ENCODE measurements at regions of chr16 and their contacts with region 1.

Region 1: DNA sequence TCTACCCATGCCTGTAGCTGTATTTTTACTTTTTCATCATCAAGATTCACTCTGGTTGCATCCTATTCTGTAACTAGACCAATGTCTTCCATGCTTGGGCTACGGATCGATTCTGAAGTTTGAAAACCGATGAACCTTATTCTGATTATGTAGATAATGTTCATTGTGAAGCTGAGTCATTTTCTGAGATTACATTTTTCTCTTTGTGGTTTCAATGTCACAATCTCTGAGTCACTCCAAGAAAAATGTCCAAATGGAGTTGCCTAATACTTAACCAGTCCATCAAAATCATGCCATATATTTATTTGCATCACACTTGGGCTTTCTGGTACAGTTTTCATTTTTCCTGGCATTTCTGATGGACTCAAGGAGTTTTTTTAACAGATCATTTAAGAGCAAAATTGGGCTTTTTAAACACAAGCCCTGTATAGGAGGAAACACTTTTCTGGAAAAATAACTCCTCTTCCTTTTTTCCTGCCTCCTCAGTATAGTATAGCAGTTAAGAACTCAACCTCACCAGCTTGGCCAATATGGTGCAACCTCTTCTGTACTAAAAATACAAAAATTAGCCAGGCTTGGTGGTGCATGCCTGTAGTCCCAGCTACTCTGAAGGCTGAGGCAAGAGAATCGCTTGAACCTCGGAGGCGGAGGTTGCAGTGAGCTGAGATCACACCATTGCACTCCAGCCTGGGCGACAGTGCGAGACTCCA is 17.5 kb downstream of the CACNG3 start:
- DNase-seq: peak; percentile 84
- H3K4me3 Mint-ChIP-seq: peak overlapping the region; percentile 2
- H3K27ac Mint-ChIP-seq: peak overlapping the region; percentile 0
- H3K4me1 Mint-ChIP-seq: peaks cover 24% of the 10 kb centered on the region
- H3K27me3 Mint-ChIP-seq: no peaks in the 10 kb centered on the region
- CTCF ChIP-seq: no peak

Region 2: GRCh38 chr16:24253192-24253591 is 20.4 kb before region 1 on chr16:
- CTCF ChIA-PET with region 1: interaction called, 23 read pairs
- POLR2A ChIA-PET with region 1: no interaction called
- intact Hi-C with region 1: no loop called
- DNase-seq: peak; percentile 60
- H3K4me3 Mint-ChIP-seq: no peak overlapping the region
- H3K27ac Mint-ChIP-seq: no peak overlapping the region
- H3K4me1 Mint-ChIP-seq: peaks cover 6% of the 10 kb centered on the region
- H3K27me3 Mint-ChIP-seq: peaks cover 52% of the 10 kb centered on the region
- CTCF ChIP-seq: peak; percentile 61

Region 3: DNA sequence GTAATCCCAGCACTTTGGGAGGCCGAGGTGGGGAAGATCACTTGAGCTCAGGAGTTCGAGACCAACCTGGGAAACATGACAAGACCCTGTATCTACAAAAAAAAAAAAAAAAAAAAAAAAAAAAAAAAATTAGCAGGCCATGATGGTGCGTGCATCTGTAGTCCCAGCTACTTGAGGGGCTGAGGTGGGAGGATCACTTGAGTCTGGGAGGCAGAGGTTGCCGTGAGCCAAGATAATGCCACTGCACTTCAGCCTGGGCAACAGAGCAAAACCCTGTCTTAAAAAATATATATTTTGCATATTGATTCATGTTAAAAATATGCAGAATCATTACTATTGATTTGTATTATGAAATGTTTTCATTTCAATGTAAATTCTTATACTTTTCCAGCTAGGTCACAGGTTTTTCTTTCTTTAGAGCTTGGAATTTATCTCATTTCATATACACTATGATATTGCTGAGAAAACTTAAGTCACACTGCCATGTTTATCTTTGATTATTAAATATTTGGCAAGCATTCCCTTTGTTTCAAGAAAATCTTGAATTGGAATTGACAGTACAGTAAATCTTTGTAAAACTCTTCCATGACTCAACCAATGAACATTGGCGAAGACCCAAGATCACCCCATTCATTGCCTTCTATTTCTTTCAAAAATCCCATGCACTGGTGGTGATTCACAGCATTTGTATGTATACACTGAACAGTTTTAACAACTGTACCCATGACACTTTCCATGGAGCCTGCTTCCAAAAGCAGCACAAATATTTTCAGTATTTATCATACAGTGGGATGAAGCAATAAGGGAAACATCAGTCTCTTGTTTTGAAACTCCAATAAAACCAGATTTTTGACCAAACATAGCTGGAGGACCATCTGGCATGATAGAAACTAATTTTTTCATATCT is 372.4 kb after region 1 on chr16:
- CTCF ChIA-PET with region 1: no interaction called
- POLR2A ChIA-PET with region 1: no interaction called
- intact Hi-C with region 1: no loop called
- DNase-seq: peak; percentile 99
- H3K4me3 Mint-ChIP-seq: no peak overlapping the region
- H3K27ac Mint-ChIP-seq: peak overlapping the region; percentile 67
- H3K4me1 Mint-ChIP-seq: no peaks in the 10 kb centered on the region
- H3K27me3 Mint-ChIP-seq: no peaks in the 10 kb centered on the region
- CTCF ChIP-seq: no peak